ENCODE measurements at regions of chr2 and their contacts with region 1.

Region 1: DNA sequence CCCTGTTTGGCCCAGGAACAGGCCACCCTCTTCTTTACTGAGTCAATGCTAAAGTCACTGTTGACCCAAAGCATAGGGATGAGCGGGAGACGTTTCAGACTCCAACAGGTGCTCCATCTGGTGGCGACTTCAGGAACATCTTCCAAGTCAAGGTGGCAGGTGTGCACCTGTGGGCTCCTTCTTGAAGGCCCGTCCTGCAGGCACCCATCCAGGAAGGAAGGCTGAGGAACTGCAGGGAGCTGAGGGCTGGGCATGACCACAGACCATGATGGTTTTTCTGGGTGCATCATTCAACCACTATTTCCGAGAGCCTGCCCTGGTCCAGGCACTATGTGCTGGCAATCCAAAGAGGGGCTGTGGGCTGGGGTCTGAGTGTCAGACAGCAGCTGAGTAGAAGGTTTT is 142.8 kb downstream of the NDUFA10 start:
- DNase-seq: no peak
- ATAC-seq: peak; percentile 83
- H3K4me3 ChIP-seq: no peak overlapping the region
- H3K27ac ChIP-seq: no peak overlapping the region
- H3K4me1 ChIP-seq: no peaks in the 10 kb centered on the region
- H3K27me3 ChIP-seq: no peaks in the 10 kb centered on the region

Region 2: GRCh38 chr2:239035361-239036078 is 846.8 kb before region 1 on chr2:
- intact Hi-C with region 1: loop called in 1 of 2 experiments (anchors 5 kb)
- DNase-seq: peak in 1 of 2 donors; percentile 90
- ATAC-seq: peak; percentile 78
- H3K4me3 ChIP-seq: no peak overlapping the region
- H3K27ac ChIP-seq: no peak overlapping the region
- H3K4me1 ChIP-seq: no peaks in the 10 kb centered on the region
- H3K27me3 ChIP-seq: no peaks in the 10 kb centered on the region

Region 3: DNA sequence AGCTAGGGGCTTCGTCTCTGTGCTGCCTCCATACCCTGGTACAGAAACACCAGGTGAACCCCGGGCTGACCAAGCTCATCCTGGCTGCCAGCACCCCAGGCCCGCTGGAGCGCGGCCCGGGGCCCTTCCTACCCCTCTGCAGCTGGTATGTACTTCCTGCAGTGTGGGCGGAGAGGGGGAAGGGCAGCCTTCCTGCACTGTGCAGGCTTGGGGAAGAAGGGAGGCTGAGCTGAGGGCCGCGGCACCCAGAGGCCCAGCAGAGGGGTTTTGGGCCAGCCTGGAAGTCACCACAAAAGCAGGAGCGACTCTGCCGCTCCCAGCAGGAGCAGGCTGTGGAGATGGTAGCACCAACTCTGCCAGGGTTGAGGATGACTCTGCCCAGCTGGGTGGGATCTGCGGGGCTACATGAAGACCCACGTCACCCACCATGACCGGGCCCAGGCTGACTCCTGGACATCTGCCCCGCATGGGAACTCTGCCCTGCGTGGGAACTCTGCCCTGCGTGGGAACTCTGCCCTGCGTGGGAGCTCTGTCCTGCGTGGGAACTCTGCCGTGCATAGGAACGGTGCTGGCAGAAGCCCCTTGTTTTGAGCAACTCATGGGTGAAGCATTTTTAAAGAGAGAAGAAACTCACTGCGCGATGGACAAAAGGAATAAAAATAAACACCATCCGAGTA is 130.5 kb before region 1 on chr2:
- intact Hi-C with region 1: loop called (anchors 2 to 5 kb)
- DNase-seq: peak; percentile 86 to 89
- ATAC-seq: peak; percentile 50
- H3K4me3 ChIP-seq: no peak overlapping the region
- H3K27ac ChIP-seq: peak overlapping the region in 1 of 2 donors; percentile 25
- H3K4me1 ChIP-seq: no peaks in the 10 kb centered on the region
- H3K27me3 ChIP-seq: no peaks in the 10 kb centered on the region

Region 4: GRCh38 chr2:239756790-239757760 is 125.3 kb before region 1 on chr2:
- intact Hi-C with region 1: loop called (anchors 2 to 5 kb)
- DNase-seq: no peak
- ATAC-seq: peak; percentile 65
- H3K4me3 ChIP-seq: no peak overlapping the region
- H3K27ac ChIP-seq: peak overlapping the region; percentile 58 to 95
- H3K4me1 ChIP-seq: no peaks in the 10 kb centered on the region
- H3K27me3 ChIP-seq: no peaks in the 10 kb centered on the region

Region 5: GRCh38 chr2:239814116-239814860 is 68.0 kb before region 1 on chr2:
- intact Hi-C with region 1: loop called (anchors 5 kb)
- DNase-seq: peak; percentile 44 to 81
- ATAC-seq: peak; percentile 75
- H3K4me3 ChIP-seq: no peak overlapping the region
- H3K27ac ChIP-seq: peak overlapping the region; percentile 94 to 100
- H3K4me1 ChIP-seq: no peaks in the 10 kb centered on the region
- H3K27me3 ChIP-seq: no peaks in the 10 kb centered on the region

Region 6: GRCh38 chr2:239819974-239820555 is 62.3 kb before region 1 on chr2:
- intact Hi-C with region 1: loop called in 1 of 2 experiments (anchors 5 kb)
- DNase-seq: peak in 1 of 2 donors; percentile 74
- ATAC-seq: no peak
- H3K4me3 ChIP-seq: no peak overlapping the region
- H3K27ac ChIP-seq: no peak overlapping the region
- H3K4me1 ChIP-seq: no peaks in the 10 kb centered on the region
- H3K27me3 ChIP-seq: no peaks in the 10 kb centered on the region